Esophagus muscularis mucosa (tissue), 4 donors: ENCODE measurements at regions of chr6 and their contacts with region 1.

Region 1: DNA sequence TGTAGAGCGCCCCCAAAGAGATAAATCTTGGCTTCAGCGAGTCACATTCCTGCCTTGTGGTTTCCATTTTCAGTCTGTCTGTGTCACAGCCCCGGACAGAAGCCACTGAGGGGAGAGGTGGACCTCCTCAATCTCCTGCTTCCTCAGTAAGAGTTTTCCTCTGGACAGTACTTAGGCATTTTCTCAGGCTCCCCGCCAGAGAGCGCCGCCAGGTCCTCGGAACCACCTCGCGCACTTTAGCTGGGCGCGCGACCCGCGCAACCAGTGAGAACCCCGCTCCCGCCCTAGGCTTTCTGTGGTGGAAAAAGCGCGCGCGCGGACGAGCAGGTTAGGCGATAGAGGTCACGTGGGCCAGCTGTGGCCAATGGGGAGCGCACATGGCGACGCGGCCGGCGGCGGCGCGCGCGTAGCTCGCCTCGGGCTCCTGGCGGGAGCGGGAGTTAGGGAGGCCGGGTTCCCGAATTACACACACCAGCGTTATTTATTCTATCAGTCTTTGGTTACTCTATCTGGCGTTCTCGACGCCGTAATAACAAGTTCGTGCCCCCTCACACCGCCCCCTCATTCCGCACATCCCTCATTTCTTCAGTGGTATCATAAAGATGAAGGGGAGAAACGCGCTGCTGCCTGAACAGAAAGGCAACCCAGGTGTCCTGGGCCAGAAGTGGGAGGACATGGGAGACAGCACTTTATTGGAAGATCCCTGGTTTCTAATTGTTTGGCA is 19.4 kb downstream of the PXT1 start:
- DNase-seq: peak; percentile 100
- H3K4me3 ChIP-seq: peak overlapping the region; percentile 56 to 71 (median 62)
- H3K27ac ChIP-seq: peak overlapping the region; percentile 87 to 92 (median 90)
- H3K4me1 ChIP-seq: peaks cover 5 to 16% (median 12%) of the 10 kb centered on the region in 4 donors
- H3K27me3 ChIP-seq: no peaks in the 10 kb centered on the region
- CTCF ChIP-seq: peak; percentile 59 to 69 (median 63)
- EP300 ChIP-seq: no peak
- POLR2A ChIP-seq: peak; percentile 43

Region 2: GRCh38 chr6:36442671-36443470 is 19.6 kb after region 1 on chr6 and contains the starts of genes KCTD20 and PXT1:
- intact Hi-C with region 1: loop called (anchors 1 kb)
- DNase-seq: peak; percentile 96
- H3K4me3 ChIP-seq: peak within 1 kb of the TSS; percentile 95 to 99 (median 96)
- H3K27ac ChIP-seq: peak within 1 kb of the TSS; percentile 96 to 100 (median 98)
- H3K4me1 ChIP-seq: peaks cover 34 to 57% (median 49%) of the 10 kb centered on the region in 4 donors
- H3K27me3 ChIP-seq: no peaks in the 10 kb centered on the region
- CTCF ChIP-seq: peak in 1 of 3 experiments; percentile 12
- EP300 ChIP-seq: no peak
- POLR2A ChIP-seq: peak; percentile 58
- total RNA-seq, gene KCTD20: 47.3 to 78.2 (median 63.0) TPM
- total RNA-seq, gene PXT1: not detected

Region 3: DNA sequence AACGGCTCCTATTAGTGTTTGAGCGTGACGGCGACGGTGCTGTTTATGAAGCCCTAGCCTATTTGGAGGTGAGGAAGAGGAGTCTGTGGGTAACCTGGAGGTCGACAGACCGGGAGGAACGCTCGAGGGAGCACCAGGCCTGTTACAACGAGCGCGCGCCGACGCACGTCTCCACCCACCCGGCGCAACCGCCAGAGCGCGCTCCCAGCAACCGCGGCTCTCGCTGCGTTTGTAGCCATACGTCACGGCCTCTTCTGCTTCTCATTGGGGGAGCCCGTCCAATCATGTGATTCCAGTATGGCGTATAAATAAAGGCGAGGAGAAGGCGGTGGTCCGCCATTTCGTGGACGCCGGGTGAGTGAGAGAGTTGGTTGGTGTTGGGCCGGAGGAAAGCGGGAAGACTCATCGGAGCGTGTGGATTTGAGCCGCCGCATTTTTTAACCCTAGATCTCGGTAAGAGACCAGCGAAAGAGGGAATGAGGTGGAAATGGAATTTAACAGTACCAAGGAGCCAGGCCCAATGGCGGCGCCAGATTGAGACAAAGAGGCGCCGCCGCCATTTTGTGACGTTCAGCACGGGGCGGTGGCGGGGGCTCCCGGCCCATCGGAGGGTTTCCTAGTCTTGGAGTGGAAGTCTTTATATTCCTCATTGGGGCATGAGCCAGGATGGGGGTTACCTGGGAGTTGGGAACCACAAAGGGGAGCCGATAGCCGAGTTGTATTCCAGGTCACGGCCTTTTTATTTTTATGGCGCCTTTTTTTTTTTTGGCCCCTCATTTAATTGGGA is 171.0 kb after region 1 on chr6 and contains the start of gene SRSF3:
- intact Hi-C with region 1: loop called (anchors 5 kb)
- DNase-seq: peak; percentile 99
- H3K4me3 ChIP-seq: peak within 1 kb of the TSS; percentile 75 to 85 (median 78)
- H3K27ac ChIP-seq: peak within 1 kb of the TSS; percentile 92 to 99 (median 96)
- H3K4me1 ChIP-seq: peaks cover 35 to 46% (median 41%) of the 10 kb centered on the region in 4 donors
- H3K27me3 ChIP-seq: no peaks in the 10 kb centered on the region
- CTCF ChIP-seq: peak; percentile 30 to 57 (median 53)
- EP300 ChIP-seq: no peak
- POLR2A ChIP-seq: peak; percentile 100
- total RNA-seq, gene SRSF3: 149 to 226 (median 180) TPM

Region 4: GRCh38 chr6:36678518-36679027 is 255.3 kb after region 1 on chr6 and contains the start of gene CDKN1A:
- intact Hi-C with region 1: loop called (anchors 5 kb)
- DNase-seq: peak; percentile 96
- H3K4me3 ChIP-seq: peak within 1 kb of the TSS; percentile 85 to 94 (median 90)
- H3K27ac ChIP-seq: peak within 1 kb of the TSS; percentile 95 to 99 (median 98)
- H3K4me1 ChIP-seq: peaks cover 34 to 61% (median 57%) of the 10 kb centered on the region in 4 donors
- H3K27me3 ChIP-seq: peaks cover 0 to 3% (median 0%) of the 10 kb centered on the region in 4 donors
- CTCF ChIP-seq: no peak
- EP300 ChIP-seq: no peak
- POLR2A ChIP-seq: peak; percentile 98
- total RNA-seq, gene CDKN1A: 47.3 to 613 (median 93.3) TPM